Sigmoid colon (tissue), 7 donors: ENCODE measurements at regions of chr1 and their contacts with region 1.

Region 1: DNA sequence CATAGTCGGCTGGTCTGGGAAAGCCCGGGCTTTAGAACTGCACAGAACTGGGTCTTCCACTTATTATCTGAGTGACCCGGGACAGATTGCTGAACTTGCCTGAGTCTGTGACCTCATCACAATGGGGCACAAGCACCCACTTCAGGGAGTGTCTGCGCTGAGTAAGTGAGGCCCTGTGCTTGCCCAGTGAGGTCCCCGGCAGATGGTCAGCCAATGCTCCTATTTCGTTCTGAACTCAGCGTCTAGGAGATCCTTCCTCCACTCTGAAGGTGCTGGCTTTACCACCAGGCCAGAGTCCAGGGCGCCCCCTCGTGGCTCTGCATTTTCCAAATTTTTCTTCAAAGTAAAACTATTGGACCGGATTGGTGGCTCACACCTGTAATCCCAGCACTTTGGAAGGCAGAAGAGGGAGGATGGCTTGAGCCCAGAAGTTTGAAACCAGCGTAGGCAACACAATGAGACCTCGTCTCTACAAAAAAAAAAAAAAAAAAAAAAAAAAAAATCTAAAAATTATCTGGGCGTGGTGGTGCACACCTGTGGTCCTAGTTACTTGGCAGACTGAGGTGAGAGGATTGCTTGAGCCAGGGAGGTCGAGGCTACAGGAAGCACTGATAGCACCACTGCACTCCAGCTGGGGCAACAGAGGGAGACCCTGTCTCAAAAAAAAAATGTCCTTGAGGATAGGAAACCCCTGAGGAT is 61.7 kb downstream of the FCRL5 start:
- DNase-seq: no peak
- H3K4me3 ChIP-seq: no peak overlapping the region
- H3K27ac ChIP-seq: no peak overlapping the region
- H3K4me1 ChIP-seq: no peaks in the 10 kb centered on the region
- H3K27me3 ChIP-seq: peaks cover 0 to 3% (median 0%) of the 10 kb centered on the region in 3 donors
- CTCF ChIP-seq: peak in 3 of 4 experiments; percentile 35 to 40 (median 37)
- EP300 ChIP-seq: no peak
- POLR2A ChIP-seq: no peak

Region 2: DNA sequence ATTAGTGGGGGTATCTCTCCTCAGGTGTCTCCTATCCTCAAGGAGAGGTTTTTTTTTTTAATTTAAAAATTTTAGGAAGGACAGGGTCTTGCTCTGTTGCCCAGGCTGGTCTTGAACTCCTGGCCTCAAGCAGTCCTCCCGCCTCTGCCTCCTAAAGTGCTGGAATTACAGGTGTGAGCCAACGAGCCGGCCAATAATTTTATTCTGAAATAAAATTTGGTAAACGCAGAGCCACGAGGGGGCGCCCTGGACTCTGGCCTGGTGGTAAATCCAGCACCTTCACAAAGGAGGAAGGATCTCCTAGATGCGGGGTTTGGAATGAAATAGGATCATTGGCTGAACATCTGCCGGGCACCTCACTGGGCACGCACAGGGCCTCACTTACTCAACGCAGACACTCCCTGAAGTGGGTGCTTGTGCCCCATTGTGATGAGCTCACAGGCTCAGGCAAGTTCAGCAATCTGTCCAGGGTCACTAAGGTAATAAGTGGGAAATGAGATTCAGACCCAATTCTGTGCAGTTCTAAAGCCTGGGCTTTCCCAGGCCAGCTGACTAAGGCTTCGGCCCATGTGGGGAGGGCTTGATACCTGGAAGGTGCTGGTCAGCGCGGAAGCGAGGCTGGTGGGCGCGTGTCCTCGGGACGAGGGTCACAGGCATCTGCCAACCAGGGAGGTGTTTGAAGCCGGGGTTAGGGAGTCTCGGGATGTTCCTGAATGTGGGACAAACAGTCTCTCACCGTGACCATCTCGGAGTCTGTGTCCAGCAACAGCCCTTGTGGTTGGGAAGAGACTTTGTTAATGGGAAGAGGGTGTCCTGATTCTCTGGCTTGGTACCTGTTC is 319.7 kb before region 1 on chr1:
- intact Hi-C with region 1: loop called (anchors 5 kb)
- DNase-seq: no peak
- H3K4me3 ChIP-seq: no peak overlapping the region
- H3K27ac ChIP-seq: no peak overlapping the region
- H3K4me1 ChIP-seq: no peaks in the 10 kb centered on the region
- H3K27me3 ChIP-seq: no peaks in the 10 kb centered on the region
- CTCF ChIP-seq: peak in 1 of 4 experiments; percentile 18
- EP300 ChIP-seq: no peak
- POLR2A ChIP-seq: no peak

Region 3: DNA sequence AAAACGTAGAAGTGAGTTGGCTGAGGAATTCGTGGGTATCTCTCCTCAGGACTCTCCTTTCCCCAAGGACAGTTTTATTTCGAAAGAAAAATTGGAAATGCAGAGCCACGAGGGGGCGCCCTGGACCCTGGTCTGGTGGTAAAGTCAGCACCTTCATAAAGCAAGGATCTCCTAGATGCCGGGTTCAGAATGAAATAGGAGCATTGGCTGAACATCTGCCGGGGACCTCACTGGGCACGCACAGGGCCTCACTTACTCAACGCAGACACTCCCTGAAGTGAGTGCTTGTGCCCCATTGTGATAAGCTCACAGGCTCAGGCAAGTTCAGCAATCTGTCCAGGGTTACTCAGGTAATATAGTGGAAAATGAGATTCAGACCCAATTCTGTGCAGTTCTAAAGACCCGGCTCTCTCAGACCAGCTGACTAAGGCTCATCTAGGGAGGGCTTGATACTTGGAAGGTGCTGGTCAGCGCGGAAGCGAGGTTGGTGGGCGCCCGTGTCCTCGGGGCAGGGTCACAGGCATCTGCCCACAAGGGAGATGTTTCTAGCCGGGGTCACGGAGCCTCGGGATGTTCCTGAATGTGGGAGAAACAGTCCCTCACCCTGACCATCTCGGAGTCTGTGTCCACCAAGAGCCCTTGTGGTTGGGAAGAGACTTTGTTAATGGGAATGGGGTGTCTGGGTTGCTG is 296.8 kb before region 1 on chr1:
- intact Hi-C with region 1: loop called (anchors 1 kb)
- DNase-seq: no peak
- H3K4me3 ChIP-seq: no peak overlapping the region
- H3K27ac ChIP-seq: no peak overlapping the region
- H3K4me1 ChIP-seq: no peaks in the 10 kb centered on the region
- H3K27me3 ChIP-seq: peaks cover 0 to 15% (median 0%) of the 10 kb centered on the region in 3 donors
- CTCF ChIP-seq: peak in 3 of 4 experiments; percentile 28 to 53 (median 42)
- EP300 ChIP-seq: no peak
- POLR2A ChIP-seq: no peak

Region 4: DNA sequence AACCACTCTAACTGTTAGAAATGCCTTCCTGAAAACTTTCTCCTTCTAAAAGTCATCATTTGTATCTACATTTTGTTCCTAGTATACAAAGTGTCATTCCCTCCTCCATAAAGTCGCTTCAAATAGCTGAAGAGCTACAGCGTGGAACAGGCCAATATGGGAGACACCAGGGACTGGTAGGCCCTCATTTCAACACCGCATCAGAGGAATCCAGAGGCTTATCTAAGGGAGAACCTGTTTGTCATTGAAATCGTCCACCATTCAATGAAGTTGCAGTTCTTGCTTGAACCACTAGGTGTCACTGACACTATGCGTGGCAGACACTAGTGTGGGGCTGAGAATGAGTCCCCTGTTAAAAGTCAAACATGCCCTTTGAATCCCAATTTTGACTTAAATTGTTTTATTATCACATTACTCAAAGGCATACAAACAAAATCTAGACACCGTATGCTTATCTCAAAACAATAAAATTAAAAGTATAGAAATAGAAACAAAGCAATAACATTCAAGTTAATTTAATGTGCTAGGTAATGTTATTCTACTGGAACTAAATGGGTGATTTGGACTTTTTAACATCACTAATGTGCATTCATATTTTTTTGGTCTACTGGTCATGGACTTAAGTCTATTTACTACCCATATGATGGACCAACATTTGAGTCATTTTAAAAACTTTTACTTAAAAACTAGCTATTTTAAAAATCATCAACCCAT is 120.7 kb before region 1 on chr1:
- intact Hi-C with region 1: loop called (anchors 2 kb)
- DNase-seq: no peak
- H3K4me3 ChIP-seq: no peak overlapping the region
- H3K27ac ChIP-seq: no peak overlapping the region
- H3K4me1 ChIP-seq: no peaks in the 10 kb centered on the region
- H3K27me3 ChIP-seq: no peaks in the 10 kb centered on the region
- CTCF ChIP-seq: peak; percentile 30 to 95 (median 77)
- EP300 ChIP-seq: no peak
- POLR2A ChIP-seq: no peak